Activated CD8-positive, alpha-beta T cell treated with anti-CD3 and anti-CD28 coated beads for 36 hours (primary cell): ENCODE measurements at regions of chr13 and their contacts with region 1.

Region 1: GRCh38 chr13:48126944-48127830 is 32.3 kb upstream of the MED4 start:
- DNase-seq: peak; percentile 24
- ATAC-seq: peak; percentile 85
- H3K4me3 Mint-ChIP-seq: peak overlapping the region; percentile 13
- H3K27ac Mint-ChIP-seq: peak overlapping the region; percentile 62
- H3K4me1 Mint-ChIP-seq: peaks cover 22% of the 10 kb centered on the region
- H3K27me3 Mint-ChIP-seq: no peaks in the 10 kb centered on the region
- CTCF ChIP-seq: peak; percentile 83

Region 2: GRCh38 chr13:48110931-48111721 is 16.1 kb before region 1 on chr13:
- CTCF ChIA-PET with region 1: interaction called, 11 read pairs
- POLR2A ChIA-PET with region 1: no interaction called
- intact Hi-C with region 1: no loop called
- DNase-seq: no peak
- ATAC-seq: no peak
- H3K4me3 Mint-ChIP-seq: no peak overlapping the region
- H3K27ac Mint-ChIP-seq: no peak overlapping the region
- H3K4me1 Mint-ChIP-seq: peaks cover 13% of the 10 kb centered on the region
- H3K27me3 Mint-ChIP-seq: peaks cover 2% of the 10 kb centered on the region
- CTCF ChIP-seq: no peak

Region 3: DNA sequence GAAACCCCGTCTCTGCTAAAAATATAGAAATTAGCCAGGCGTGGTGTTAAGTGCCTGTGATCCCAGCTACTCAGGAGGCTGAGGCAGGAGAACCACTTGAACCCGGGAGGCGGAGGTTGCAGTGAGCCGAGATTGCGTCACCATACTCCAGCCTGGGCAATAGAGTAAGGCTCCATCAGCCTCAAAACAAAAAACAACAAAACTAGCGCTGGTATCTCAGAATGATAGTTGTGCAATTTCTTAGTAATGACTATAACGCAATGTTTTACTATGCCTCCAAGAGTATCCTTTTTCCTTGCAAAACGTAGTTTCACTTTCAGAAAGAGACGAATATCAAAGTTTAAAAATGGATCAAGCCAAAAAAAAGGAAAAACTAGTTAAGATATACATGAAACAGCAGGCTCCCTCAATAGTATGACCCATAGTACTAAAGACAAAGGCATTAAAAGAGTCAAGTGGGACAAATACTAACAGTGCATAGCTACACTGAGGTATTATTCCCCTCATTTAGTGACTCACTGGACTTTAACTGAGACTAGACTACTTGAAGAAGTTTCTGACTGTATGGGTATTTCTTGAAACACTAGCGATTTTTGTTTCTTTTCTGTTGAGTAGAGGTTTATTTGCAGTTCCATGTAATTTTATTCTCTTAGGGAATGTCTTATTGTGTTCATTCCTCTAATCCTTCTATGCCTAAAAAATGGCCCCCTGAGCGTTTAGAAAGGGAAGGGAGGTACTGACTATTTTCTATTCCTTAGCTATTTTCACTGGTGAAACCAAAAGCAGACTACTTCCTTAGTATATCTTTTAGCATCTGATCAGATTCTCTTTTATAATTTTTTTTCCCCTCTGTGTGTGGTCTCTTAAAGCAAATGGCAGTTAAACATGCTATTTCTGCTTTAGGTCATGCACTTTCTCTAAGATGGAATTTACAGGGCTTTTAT is 95.4 kb after region 1 on chr13:
- CTCF ChIA-PET with region 1: interaction called, 24 read pairs
- POLR2A ChIA-PET with region 1: no interaction called
- intact Hi-C with region 1: no loop called
- DNase-seq: no peak
- ATAC-seq: peak; percentile 67
- H3K4me3 Mint-ChIP-seq: peak overlapping the region; percentile 61
- H3K27ac Mint-ChIP-seq: peak overlapping the region; percentile 94
- H3K4me1 Mint-ChIP-seq: peaks cover 50% of the 10 kb centered on the region
- H3K27me3 Mint-ChIP-seq: no peaks in the 10 kb centered on the region
- CTCF ChIP-seq: no peak

Region 4: GRCh38 chr13:48233046-48233907 is 106.1 kb after region 1 on chr13 and contains the start of gene ITM2B:
- CTCF ChIA-PET with region 1: interaction called, 21 read pairs
- POLR2A ChIA-PET with region 1: interaction called, 4 read pairs
- intact Hi-C with region 1: loop called (anchors 5 kb)
- DNase-seq: peak; percentile 60
- ATAC-seq: peak; percentile 69
- H3K4me3 Mint-ChIP-seq: peak within 1 kb of the TSS; percentile 88
- H3K27ac Mint-ChIP-seq: peak within 1 kb of the TSS; percentile 95
- H3K4me1 Mint-ChIP-seq: peaks cover 53% of the 10 kb centered on the region
- H3K27me3 Mint-ChIP-seq: no peaks in the 10 kb centered on the region
- CTCF ChIP-seq: peak; percentile 61
- total RNA-seq, gene ITM2B: 85.5 to 91.2 TPM

Region 5: DNA sequence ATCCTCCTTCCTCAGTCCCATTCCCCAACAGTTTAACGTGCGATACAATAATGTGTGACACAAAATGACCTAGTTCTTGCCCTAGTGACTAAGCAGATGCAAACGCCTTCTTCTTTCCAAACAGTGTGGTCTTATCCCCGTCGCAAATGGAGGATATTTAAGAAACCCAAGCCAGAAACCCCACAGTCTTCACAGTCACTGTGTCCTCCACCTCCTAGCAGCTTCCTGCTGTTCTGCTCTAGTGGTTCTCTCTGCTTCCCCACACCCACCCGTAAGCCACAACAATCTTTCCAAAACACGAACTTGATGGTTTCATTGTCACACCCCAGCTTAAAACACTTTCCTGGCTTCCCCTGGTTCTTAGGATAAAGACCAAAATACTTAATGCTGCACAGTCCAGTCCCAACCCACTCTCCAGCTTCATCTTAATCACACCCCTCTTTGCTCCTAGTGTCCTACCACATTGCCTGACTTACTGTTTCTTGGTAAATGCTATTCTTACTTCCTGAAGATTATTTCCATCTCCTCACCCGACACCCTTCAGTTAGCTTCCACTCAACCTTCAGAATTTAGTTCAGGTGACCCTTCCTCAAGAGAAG is 138.1 kb after region 1 on chr13:
- CTCF ChIA-PET with region 1: interaction called, 19 read pairs
- POLR2A ChIA-PET with region 1: no interaction called
- intact Hi-C with region 1: no loop called
- DNase-seq: peak; percentile 62
- ATAC-seq: peak; percentile 78
- H3K4me3 Mint-ChIP-seq: peak overlapping the region; percentile 18
- H3K27ac Mint-ChIP-seq: peak overlapping the region; percentile 87
- H3K4me1 Mint-ChIP-seq: peaks cover 55% of the 10 kb centered on the region
- H3K27me3 Mint-ChIP-seq: no peaks in the 10 kb centered on the region
- CTCF ChIP-seq: no peak

Region 6: DNA sequence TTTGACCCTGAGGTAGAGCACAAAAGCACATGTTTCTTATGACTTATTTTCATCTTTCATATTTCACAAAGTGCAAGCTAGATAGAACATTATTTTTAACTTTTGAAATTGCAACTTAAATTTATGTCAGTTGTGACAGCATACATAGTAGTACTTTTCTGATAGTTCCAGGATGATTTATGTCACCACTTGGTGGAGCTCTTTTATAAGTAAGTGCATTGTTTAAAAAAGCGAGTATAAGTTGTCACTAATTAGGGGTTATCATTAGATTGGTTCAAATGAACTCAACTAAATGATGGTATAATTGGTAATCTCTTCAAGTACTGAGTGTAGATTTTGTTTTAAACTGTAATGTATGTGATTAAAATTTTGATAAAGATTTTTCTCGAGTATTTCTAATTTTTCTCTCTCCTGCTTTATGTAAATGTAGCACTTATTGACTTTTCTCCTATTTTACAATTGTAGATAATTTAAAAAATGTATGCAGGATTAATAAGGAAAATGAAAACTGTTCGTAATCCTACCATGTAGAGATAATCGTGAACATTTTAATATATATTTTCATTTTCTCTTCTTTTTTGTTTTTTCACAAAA is 207.4 kb after region 1 on chr13:
- CTCF ChIA-PET with region 1: interaction called, 4 read pairs
- POLR2A ChIA-PET with region 1: no interaction called
- intact Hi-C with region 1: loop called (anchors 5 kb)
- DNase-seq: no peak
- ATAC-seq: peak; percentile 58
- H3K4me3 Mint-ChIP-seq: no peak overlapping the region
- H3K27ac Mint-ChIP-seq: no peak overlapping the region
- H3K4me1 Mint-ChIP-seq: peaks cover 11% of the 10 kb centered on the region
- H3K27me3 Mint-ChIP-seq: no peaks in the 10 kb centered on the region
- CTCF ChIP-seq: peak; percentile 87

Region 7: GRCh38 chr13:48580185-48580803 is 453.1 kb after region 1 on chr13:
- CTCF ChIA-PET with region 1: interaction called, 29 read pairs
- POLR2A ChIA-PET with region 1: no interaction called
- intact Hi-C with region 1: loop called (anchors 10 kb)
- DNase-seq: peak; percentile 85
- ATAC-seq: peak; percentile 67
- H3K4me3 Mint-ChIP-seq: no peak overlapping the region
- H3K27ac Mint-ChIP-seq: no peak overlapping the region
- H3K4me1 Mint-ChIP-seq: peaks cover 3% of the 10 kb centered on the region
- H3K27me3 Mint-ChIP-seq: peaks cover 25% of the 10 kb centered on the region
- CTCF ChIP-seq: peak; percentile 90